Activated naive CD4-positive, alpha-beta T cell treated with anti-CD3 and anti-CD28 coated beads for 36 hours (primary cell): ENCODE measurements at regions of chr4 and their contacts with region 1.

Region 1: GRCh38 chr4:24980064-24980690 is 50.6 kb downstream of the LGI2 start:
- DNase-seq: peak; percentile 70
- H3K4me3 Mint-ChIP-seq: no peak overlapping the region
- H3K27ac Mint-ChIP-seq: no peak overlapping the region
- H3K4me1 Mint-ChIP-seq: peaks cover 11% of the 10 kb centered on the region
- H3K27me3 Mint-ChIP-seq: peaks cover 22% of the 10 kb centered on the region

Region 2: DNA sequence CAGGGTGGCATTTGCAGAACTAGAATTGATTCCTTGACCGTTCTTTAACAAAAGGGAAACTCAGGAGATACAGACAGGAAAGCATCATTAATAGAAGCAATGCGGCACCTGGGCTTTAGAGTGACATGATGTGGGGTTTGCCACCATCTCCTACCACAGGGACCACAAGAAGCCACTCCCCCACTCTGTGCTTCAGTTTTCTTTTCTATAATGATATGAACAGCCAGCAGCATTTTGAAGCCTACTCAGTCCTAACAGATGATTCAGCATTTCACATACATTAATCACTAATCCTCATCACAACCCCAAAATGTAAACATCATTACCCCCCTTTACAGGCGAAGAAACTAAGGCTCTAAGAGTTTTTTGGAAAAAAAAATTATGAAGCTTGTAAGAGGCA is 90.2 kb before region 1 on chr4:
- CTCF ChIA-PET with region 1: no interaction called
- intact Hi-C with region 1: no loop called
- DNase-seq: no peak
- H3K4me3 Mint-ChIP-seq: no peak overlapping the region
- H3K27ac Mint-ChIP-seq: no peak overlapping the region
- H3K4me1 Mint-ChIP-seq: no peaks in the 10 kb centered on the region
- H3K27me3 Mint-ChIP-seq: peaks cover 2% of the 10 kb centered on the region

Region 3: DNA sequence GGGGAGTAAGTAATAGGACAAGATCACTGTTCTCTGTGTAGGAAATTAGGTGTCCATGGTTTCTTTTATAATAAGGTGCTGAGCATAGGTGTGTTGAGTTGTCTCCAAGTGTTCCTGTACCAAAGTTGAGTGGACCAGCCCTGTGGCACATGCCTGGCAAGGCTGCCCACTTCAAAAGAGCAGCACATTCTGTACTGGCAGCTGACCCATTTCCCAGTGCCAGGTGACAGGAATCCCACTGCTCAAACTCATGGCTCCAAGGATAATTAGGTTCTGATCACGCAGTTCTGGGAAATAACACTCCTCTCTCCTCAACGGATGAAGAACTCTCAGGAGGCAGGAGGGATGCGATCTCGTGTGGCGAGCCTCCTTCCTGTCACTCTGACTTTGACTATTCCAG is 63.4 kb after region 1 on chr4:
- CTCF ChIA-PET with region 1: interaction called, 4 read pairs
- intact Hi-C with region 1: loop called (anchors 1 kb)
- DNase-seq: no peak
- H3K4me3 Mint-ChIP-seq: no peak overlapping the region
- H3K27ac Mint-ChIP-seq: no peak overlapping the region
- H3K4me1 Mint-ChIP-seq: no peaks in the 10 kb centered on the region
- H3K27me3 Mint-ChIP-seq: peaks cover 23% of the 10 kb centered on the region

Region 4: DNA sequence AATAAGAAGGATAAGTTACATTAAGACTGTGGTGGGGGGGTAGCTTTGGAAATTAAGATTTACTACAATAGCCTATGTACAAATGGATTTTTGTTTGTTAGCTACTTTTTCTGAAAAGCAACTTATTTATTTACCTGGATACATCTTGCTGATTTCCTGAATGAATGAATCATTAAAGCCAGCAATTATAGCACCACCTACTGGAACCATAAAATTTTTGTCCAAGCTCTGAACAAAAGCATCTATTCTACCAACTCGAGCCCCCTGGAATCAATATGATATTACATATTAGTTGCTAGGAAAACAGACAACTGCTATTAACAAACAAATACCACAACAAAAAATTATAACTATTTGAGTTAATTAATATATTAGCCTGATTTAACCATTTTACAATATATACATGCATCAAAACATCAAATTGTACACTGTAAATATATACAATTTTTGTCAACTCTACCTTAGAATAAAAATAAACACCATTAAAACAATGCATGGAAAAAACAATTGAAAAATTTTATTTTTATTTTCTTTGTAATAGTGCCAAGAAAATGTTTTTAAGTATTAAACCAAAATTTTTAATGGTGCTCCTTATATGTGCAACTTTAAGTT is 164.8 kb after region 1 on chr4:
- CTCF ChIA-PET with region 1: interaction called, 25 read pairs
- intact Hi-C with region 1: loop called (anchors 1 kb)
- DNase-seq: no peak
- H3K4me3 Mint-ChIP-seq: no peak overlapping the region
- H3K27ac Mint-ChIP-seq: no peak overlapping the region
- H3K4me1 Mint-ChIP-seq: no peaks in the 10 kb centered on the region
- H3K27me3 Mint-ChIP-seq: no peaks in the 10 kb centered on the region

Region 5: GRCh38 chr4:25367004-25367621 is 386.9 kb after region 1 on chr4:
- CTCF ChIA-PET with region 1: interaction called, 32 read pairs
- intact Hi-C with region 1: loop called (anchors 1 kb)
- DNase-seq: peak; percentile 12
- H3K4me3 Mint-ChIP-seq: no peak overlapping the region
- H3K27ac Mint-ChIP-seq: no peak overlapping the region
- H3K4me1 Mint-ChIP-seq: no peaks in the 10 kb centered on the region
- H3K27me3 Mint-ChIP-seq: no peaks in the 10 kb centered on the region